ENCODE measurements at regions of chr11 and their contacts with region 1.

Region 1: DNA sequence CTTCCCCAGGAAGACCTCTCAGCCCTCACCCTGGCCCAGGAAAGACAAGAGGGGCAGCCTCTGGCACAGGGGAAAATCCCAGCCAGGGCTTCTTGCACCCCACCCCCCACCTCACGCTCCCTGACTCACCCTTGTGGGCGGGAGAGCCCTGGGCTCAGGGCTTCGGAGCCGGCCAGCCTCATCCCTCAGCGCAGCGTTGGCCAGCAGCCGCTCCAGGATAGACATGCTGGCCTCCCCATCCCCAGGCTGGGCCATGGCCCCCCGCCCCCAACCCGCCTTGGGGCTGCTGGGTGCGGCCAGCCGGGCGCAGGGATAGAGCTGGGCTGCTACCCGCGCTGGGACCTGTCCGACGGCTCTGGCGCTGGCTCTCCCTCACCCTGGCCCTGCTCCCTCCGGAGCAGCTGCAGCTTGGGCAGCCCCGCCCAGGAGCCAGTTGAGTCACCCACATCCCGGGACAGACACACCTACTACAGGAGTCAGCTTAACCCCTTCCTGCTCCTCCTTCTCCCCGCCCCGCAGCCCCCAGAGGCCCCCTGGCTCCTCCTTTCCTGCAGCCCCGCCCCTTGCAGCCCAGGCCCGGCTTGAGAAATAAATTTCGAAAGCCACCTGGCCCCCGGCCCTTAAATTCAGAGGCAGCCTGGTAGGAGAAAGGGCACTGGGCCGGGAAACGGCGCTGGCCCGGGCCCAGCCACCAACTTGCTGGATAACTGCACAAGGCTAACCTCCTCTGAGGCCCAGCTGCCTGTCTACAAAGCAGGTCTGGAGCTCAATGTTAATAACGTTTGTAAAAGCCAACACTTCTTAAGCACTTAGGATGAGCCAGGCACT is 13.4 kb downstream of the TNKS1BP1 start:
- DNase-seq: peak; percentile 97
- H3K4me3 Mint-ChIP-seq: peak overlapping the region; percentile 80
- H3K27ac Mint-ChIP-seq: peak overlapping the region; percentile 95
- H3K4me1 Mint-ChIP-seq: peaks cover 49% of the 10 kb centered on the region
- H3K27me3 Mint-ChIP-seq: no peaks in the 10 kb centered on the region
- CTCF ChIP-seq: no peak

Region 2: DNA sequence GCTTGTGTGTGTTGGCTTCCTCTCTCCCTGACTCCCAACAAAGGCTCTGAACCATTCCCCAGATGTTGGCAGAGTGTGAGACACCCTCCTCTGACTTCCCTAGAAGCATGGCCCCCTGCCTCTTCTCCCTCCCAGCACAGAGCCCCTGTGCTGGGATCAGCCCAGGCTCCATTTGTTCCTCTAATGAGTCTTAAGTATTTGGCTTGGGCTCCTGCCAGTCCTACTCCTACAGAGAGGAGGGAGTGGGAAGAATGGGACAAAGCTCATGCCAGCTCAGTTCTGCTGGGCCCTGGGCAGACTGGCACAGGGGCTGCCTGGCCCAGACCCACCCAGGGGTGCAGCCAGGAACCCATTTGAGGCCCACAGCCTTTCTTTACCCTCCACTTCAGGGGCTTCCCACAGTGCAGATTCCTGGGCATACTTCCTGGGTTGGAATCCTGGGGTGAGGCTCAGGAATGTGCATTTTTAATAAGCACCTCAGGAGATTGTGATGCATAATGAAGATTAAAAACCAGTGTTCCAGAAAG is 16.7 kb before region 1 on chr11:
- CTCF ChIA-PET with region 1: interaction called, 12 read pairs
- POLR2A ChIA-PET with region 1: interaction called, 283 read pairs
- intact Hi-C with region 1: no loop called
- DNase-seq: peak; percentile 82
- H3K4me3 Mint-ChIP-seq: peak overlapping the region; percentile 31
- H3K27ac Mint-ChIP-seq: peak overlapping the region; percentile 90
- H3K4me1 Mint-ChIP-seq: peaks cover 38% of the 10 kb centered on the region
- H3K27me3 Mint-ChIP-seq: no peaks in the 10 kb centered on the region
- CTCF ChIP-seq: no peak

Region 3: GRCh38 chr11:57335343-57336110 is 24.2 kb after region 1 on chr11 and contains the start of gene SSRP1:
- CTCF ChIA-PET with region 1: no interaction called
- POLR2A ChIA-PET with region 1: interaction called, 10 read pairs
- intact Hi-C with region 1: no loop called
- DNase-seq: peak; percentile 83
- H3K4me3 Mint-ChIP-seq: peak within 1 kb of the TSS; percentile 82
- H3K27ac Mint-ChIP-seq: peak within 1 kb of the TSS; percentile 95
- H3K4me1 Mint-ChIP-seq: peaks cover 20% of the 10 kb centered on the region
- H3K27me3 Mint-ChIP-seq: no peaks in the 10 kb centered on the region
- CTCF ChIP-seq: no peak
- total RNA-seq, gene SSRP1: 159 and 229 TPM in 2 replicates

Measured in MCF 10A (cell line).